CD8-positive, alpha-beta T cell (primary cell): ENCODE measurements at regions of chr1 and their contacts with region 1.

Region 1: DNA sequence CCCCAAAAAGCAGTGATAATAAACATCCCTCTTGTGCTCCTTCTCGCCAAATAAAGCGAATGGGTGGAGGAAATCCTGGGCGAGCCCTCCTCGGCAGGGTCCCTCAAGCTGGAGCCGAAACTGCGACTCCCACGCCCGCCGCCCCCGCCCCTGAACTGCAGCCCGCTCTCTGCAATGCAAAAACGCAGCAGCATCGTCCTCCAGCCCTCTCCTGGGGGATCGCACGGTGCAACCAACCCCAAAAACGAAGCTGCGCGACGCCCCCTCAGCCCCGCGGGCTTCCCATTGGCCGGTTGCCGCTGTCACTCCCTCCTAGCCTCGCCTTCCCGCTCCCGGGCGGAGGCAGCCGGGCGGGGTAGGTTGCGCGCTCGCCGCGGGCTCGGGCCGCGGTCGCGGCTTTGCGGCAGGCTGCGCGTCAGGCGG is at the start of gene TMCC2:
- DNase-seq: peak; percentile 59 to 92 (median 85)
- ATAC-seq: peak; percentile 82
- H3K4me3 ChIP-seq: peak within 1 kb of the TSS; percentile 60 to 70
- H3K4me3 Mint-ChIP-seq: peak within 1 kb of the TSS; percentile 91
- H3K27ac ChIP-seq: no peak within 1 kb of the TSS
- H3K27ac Mint-ChIP-seq: peak within 1 kb of the TSS; percentile 82
- H3K4me1 ChIP-seq: peaks cover 12% of the 10 kb centered on the region
- H3K4me1 Mint-ChIP-seq: peaks cover 31% of the 10 kb centered on the region
- H3K27me3 ChIP-seq: no peaks in the 10 kb centered on the region
- H3K27me3 Mint-ChIP-seq: peaks cover 5% of the 10 kb centered on the region
- CTCF ChIP-seq: no peak
- total RNA-seq, gene TMCC2: 1.5 to 2.0 TPM

Region 2: DNA sequence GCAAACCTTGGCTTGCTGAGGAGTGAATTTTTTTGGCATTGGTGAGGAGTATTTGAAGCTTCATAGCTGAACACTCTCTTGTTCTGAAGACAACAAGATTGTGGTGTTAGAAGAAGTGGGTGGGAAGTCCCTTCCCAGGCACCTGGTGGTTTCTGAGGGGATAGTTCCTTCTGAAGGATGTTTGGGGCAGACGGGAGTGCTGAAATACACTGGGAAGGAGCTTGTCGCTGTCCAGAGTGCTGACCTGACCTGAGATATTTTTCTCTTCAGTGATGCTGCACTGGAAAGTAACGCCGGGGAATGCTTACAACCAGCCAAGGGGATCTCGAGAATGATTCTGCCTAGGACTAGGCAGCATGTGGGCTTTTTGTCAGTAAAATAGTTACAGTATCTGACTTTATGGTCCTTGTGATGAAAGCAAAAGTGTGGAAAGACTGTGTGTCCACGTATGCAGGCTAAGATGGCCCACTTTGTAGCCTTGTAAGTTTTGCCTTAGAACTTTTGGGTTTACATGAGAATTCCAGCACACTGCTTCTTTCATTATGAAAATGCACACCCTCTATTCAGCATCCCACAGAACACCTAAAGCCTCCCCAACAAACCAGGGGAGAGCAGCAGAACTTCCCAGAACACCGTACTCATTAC is 390.0 kb before region 1 on chr1:
- CTCF ChIA-PET with region 1: no interaction called
- POLR2A ChIA-PET with region 1: no interaction called
- intact Hi-C with region 1: no loop called
- DNase-seq: peak in 4 of 9 experiments; percentile 13 to 24 (median 18)
- ATAC-seq: no peak
- H3K4me3 ChIP-seq: no peak overlapping the region
- H3K4me3 Mint-ChIP-seq: no peak overlapping the region
- H3K27ac ChIP-seq: no peak overlapping the region
- H3K27ac Mint-ChIP-seq: no peak overlapping the region
- H3K4me1 ChIP-seq: no peaks in the 10 kb centered on the region
- H3K4me1 Mint-ChIP-seq: no peaks in the 10 kb centered on the region
- H3K27me3 ChIP-seq: peaks cover 0 to 3% of the 10 kb centered on the region in 2 experiments
- H3K27me3 Mint-ChIP-seq: peaks cover 22% of the 10 kb centered on the region
- CTCF ChIP-seq: no peak

Region 3: DNA sequence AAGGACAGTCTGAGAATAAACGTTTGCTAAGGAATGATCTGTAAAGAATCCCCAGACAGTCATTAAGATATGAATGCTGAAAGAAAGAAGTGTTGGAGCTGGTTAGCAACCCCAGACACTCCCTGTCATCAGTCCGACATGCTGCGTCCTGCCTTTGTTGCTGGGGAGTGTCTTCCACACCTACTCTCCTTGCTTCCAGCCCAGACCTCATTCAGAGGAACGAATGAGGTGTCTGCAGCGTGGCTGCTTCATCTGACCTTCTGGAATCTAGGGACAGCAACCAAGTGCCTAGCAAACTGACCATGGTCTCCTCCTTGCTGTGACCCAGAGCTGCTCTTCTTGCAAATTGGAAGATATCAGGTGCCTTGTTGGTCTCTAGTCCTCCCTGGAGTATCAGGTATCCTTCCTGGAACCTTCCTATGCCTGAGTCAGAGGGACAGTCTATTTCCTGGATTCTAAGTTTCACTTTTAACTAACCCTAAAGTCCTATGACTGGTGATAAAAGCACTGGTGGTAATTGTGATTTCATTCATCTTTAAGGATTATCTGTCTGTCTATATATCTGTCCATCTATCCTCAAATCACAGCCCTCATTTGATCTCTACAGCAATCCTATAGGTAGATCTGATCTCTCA is 311.6 kb before region 1 on chr1:
- CTCF ChIA-PET with region 1: no interaction called
- POLR2A ChIA-PET with region 1: no interaction called
- intact Hi-C with region 1: no loop called
- DNase-seq: no peak
- ATAC-seq: no peak
- H3K4me3 ChIP-seq: no peak overlapping the region
- H3K4me3 Mint-ChIP-seq: no peak overlapping the region
- H3K27ac ChIP-seq: no peak overlapping the region
- H3K27ac Mint-ChIP-seq: no peak overlapping the region
- H3K4me1 ChIP-seq: no peaks in the 10 kb centered on the region
- H3K4me1 Mint-ChIP-seq: no peaks in the 10 kb centered on the region
- H3K27me3 ChIP-seq: no peaks in the 10 kb centered on the region
- H3K27me3 Mint-ChIP-seq: peaks cover 22% of the 10 kb centered on the region
- CTCF ChIP-seq: no peak

Region 4: GRCh38 chr1:205211169-205211838 is 16.3 kb before region 1 on chr1 and contains the start of gene DSTYK:
- CTCF ChIA-PET with region 1: interaction called, 5 read pairs
- POLR2A ChIA-PET with region 1: interaction called, 17 read pairs
- intact Hi-C with region 1: loop called (anchors 1 kb)
- DNase-seq: peak; percentile 83 to 96 (median 91)
- ATAC-seq: peak; percentile 92
- H3K4me3 ChIP-seq: peak within 1 kb of the TSS; percentile 55 to 93
- H3K4me3 Mint-ChIP-seq: peak within 1 kb of the TSS; percentile 96
- H3K27ac ChIP-seq: peak within 1 kb of the TSS; percentile 58 to 80
- H3K27ac Mint-ChIP-seq: peak within 1 kb of the TSS; percentile 98
- H3K4me1 ChIP-seq: peaks cover 15% of the 10 kb centered on the region
- H3K4me1 Mint-ChIP-seq: peaks cover 50% of the 10 kb centered on the region
- H3K27me3 ChIP-seq: no peaks in the 10 kb centered on the region
- H3K27me3 Mint-ChIP-seq: no peaks in the 10 kb centered on the region
- CTCF ChIP-seq: no peak
- total RNA-seq, gene DSTYK: 15.4 to 17.2 TPM

Region 5: GRCh38 chr1:205237526-205238484 is 10.2 kb after region 1 on chr1:
- CTCF ChIA-PET with region 1: interaction called, 18 read pairs
- POLR2A ChIA-PET with region 1: interaction called, 4 read pairs
- intact Hi-C with region 1: no loop called
- DNase-seq: peak in 1 of 9 experiments; percentile 36
- ATAC-seq: no peak
- H3K4me3 ChIP-seq: no peak overlapping the region
- H3K4me3 Mint-ChIP-seq: no peak overlapping the region
- H3K27ac ChIP-seq: no peak overlapping the region
- H3K27ac Mint-ChIP-seq: no peak overlapping the region
- H3K4me1 ChIP-seq: no peaks in the 10 kb centered on the region
- H3K4me1 Mint-ChIP-seq: peaks cover 10% of the 10 kb centered on the region
- H3K27me3 ChIP-seq: no peaks in the 10 kb centered on the region
- H3K27me3 Mint-ChIP-seq: no peaks in the 10 kb centered on the region
- CTCF ChIP-seq: no peak

Region 6: GRCh38 chr1:205284343-205285144 is 56.9 kb after region 1 on chr1:
- CTCF ChIA-PET with region 1: interaction called, 3 read pairs
- POLR2A ChIA-PET with region 1: interaction called, 3 read pairs
- intact Hi-C with region 1: loop called in 1 of 2 experiments (anchors 2 kb)
- DNase-seq: peak; percentile 78 to 96 (median 93)
- ATAC-seq: peak; percentile 62
- H3K4me3 ChIP-seq: peak overlapping the region; percentile 34 to 40
- H3K4me3 Mint-ChIP-seq: peak overlapping the region; percentile 83
- H3K27ac ChIP-seq: peak overlapping the region; percentile 56 to 71
- H3K27ac Mint-ChIP-seq: peak overlapping the region; percentile 96
- H3K4me1 ChIP-seq: peaks cover 81% of the 10 kb centered on the region
- H3K4me1 Mint-ChIP-seq: peaks cover 85% of the 10 kb centered on the region
- H3K27me3 ChIP-seq: no peaks in the 10 kb centered on the region
- H3K27me3 Mint-ChIP-seq: no peaks in the 10 kb centered on the region
- CTCF ChIP-seq: no peak

Region 7: GRCh38 chr1:205631727-205632373 is 404.3 kb after region 1 on chr1 and contains the start of gene ELK4:
- CTCF ChIA-PET with region 1: no interaction called
- POLR2A ChIA-PET with region 1: interaction called, 3 read pairs
- intact Hi-C with region 1: loop called in 1 of 2 experiments (anchors 5 kb)
- DNase-seq: peak; percentile 99 to 100 (median 100)
- ATAC-seq: peak; percentile 78
- H3K4me3 ChIP-seq: peak within 1 kb of the TSS; percentile 64 to 71
- H3K4me3 Mint-ChIP-seq: peak within 1 kb of the TSS; percentile 89
- H3K27ac ChIP-seq: peak within 1 kb of the TSS; percentile 75 to 95
- H3K27ac Mint-ChIP-seq: peak within 1 kb of the TSS; percentile 99
- H3K4me1 ChIP-seq: peaks cover 37% of the 10 kb centered on the region
- H3K4me1 Mint-ChIP-seq: peaks cover 44% of the 10 kb centered on the region
- H3K27me3 ChIP-seq: no peaks in the 10 kb centered on the region
- H3K27me3 Mint-ChIP-seq: no peaks in the 10 kb centered on the region
- CTCF ChIP-seq: peak; percentile 78
- total RNA-seq, gene ELK4: 142 to 147 TPM

Region 8: DNA sequence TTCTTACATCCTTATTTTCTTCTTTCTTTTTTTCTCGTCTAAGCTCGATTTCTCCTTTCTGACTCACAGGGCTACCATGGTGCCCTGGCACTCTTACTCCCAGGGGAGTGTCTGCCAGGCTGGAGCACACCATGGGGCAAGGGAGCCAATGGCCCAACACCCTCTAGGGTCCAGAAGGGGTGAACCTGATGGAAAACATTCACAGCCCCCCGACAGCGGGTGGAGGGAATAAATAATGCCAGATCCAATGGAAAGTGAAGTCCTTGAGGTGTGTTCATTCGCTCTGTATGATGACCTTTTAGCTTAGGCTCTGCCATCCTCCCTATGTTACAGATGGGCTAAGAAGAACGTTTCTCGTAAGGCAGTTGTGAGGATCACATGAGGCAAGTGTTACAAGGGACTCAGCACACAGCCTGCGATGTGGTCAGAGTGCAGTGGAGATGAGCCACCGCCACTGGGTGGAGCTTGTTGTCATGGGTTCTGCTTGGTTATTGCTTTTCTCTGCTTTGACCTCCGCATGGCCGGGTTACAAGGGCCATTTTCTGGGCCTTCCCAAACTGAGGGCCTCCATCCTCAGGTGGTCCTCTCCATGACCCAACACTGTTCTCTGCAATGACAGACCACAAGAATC is 1697.6 kb after region 1 on chr1:
- CTCF ChIA-PET with region 1: no interaction called
- POLR2A ChIA-PET with region 1: no interaction called
- intact Hi-C with region 1: loop called in 1 of 2 experiments (anchors 5 kb)
- DNase-seq: peak; percentile 49 to 90 (median 70)
- ATAC-seq: peak; percentile 40
- H3K4me3 ChIP-seq: no peak overlapping the region
- H3K4me3 Mint-ChIP-seq: no peak overlapping the region
- H3K27ac ChIP-seq: peak overlapping the region; percentile 46 to 95
- H3K27ac Mint-ChIP-seq: no peak overlapping the region
- H3K4me1 ChIP-seq: peaks cover 62% of the 10 kb centered on the region
- H3K4me1 Mint-ChIP-seq: peaks cover 51% of the 10 kb centered on the region
- H3K27me3 ChIP-seq: no peaks in the 10 kb centered on the region
- H3K27me3 Mint-ChIP-seq: no peaks in the 10 kb centered on the region
- CTCF ChIP-seq: no peak